ENCODE measurements at regions of chr21 and their contacts with region 1.

Region 1: DNA sequence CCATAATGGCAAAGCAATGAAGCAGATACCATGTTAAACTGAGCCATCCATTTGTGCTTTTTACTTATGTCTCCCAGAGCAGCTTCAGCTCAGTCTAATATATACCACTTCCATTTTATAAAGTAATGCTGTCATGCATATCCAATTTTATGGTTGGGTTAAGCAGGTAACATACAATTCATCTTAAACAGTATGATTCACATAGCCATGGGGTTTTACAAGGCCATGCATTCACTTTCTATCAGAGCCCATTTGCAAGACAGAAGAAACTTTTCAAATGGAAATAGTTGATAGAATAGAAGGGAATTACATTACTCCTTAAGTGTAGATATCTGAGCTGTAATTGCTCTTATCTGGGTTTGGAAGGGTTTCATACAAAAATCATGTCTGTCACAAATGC is 580.5 kb upstream of the CXADR start:
- DNase-seq: no peak
- ATAC-seq: no peak
- H3K4me3 ChIP-seq: no peak overlapping the region
- H3K27ac ChIP-seq: no peak overlapping the region
- H3K4me1 ChIP-seq: no peaks in the 10 kb centered on the region
- H3K27me3 ChIP-seq: no peaks in the 10 kb centered on the region
- CTCF ChIP-seq: no peak

Region 2: DNA sequence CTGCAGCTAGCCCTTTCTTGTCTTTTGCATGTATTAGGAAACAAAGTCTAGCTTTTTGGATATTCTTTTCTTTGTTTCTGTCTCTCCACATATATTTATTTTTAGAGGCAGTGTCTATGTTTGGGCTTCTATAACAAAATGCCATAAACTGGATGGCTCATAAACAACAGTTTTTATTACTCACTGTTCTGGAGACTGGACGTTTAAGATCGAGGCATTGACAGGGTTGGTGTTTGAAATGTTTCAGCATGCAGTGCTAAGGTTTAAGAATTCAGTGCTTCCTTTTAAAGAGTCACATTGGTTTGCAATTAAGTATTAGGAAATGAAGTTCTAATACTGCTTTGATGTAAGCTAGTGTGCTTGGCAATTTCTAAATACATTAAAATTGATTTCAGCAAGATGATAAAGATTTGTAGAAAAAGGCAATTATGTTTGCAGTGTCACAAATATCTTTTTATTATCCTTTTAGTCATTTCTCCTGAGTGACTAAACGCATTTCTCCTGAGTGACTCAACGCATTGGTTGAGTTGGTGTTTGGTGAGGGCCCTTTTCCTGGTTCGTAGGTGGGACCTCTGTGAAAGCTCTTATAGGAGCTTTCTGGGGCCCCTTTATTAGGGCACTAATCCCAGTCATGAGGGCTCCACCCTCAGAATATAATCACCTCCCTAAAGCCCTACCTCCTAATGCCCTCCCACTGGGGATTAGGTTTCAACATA is 885.5 kb before region 1 on chr21:
- intact Hi-C with region 1: loop called in 1 of 2 experiments (anchors 5 kb)
- DNase-seq: no peak
- ATAC-seq: no peak
- H3K4me3 ChIP-seq: no peak overlapping the region
- H3K27ac ChIP-seq: no peak overlapping the region
- H3K4me1 ChIP-seq: no peaks in the 10 kb centered on the region
- H3K27me3 ChIP-seq: no peaks in the 10 kb centered on the region
- CTCF ChIP-seq: no peak

Region 3: DNA sequence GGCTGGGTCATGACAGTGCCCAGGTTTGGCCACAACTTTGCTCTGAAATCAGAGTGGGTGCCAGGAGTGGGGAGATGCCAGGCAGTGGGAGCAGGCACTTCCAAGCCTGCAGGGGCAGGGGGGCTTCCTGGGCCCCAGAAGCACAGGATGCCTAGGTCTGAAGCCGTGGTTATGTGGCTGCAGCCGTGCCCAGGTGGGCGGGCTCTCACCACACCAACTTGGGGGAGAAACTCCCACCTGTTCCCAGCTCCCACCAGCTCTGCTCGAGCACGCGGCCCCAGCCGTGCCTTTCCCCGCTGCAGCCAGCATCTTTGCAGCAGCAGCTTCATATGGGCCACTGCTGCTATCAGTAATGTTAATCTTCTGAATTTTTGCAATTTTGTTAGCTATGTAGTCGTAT is 871.1 kb before region 1 on chr21:
- intact Hi-C with region 1: no loop called
- DNase-seq: no peak
- ATAC-seq: no peak
- H3K4me3 ChIP-seq: no peak overlapping the region
- H3K27ac ChIP-seq: no peak overlapping the region
- H3K4me1 ChIP-seq: no peaks in the 10 kb centered on the region
- H3K27me3 ChIP-seq: no peaks in the 10 kb centered on the region
- CTCF ChIP-seq: no peak

Region 4: GRCh38 chr21:16992448-16992847 is 60.1 kb after region 1 on chr21:
- intact Hi-C with region 1: loop called in 1 of 2 experiments (anchors 10 kb)
- DNase-seq: no peak
- ATAC-seq: no peak
- H3K4me3 ChIP-seq: no peak overlapping the region
- H3K27ac ChIP-seq: no peak overlapping the region
- H3K4me1 ChIP-seq: no peaks in the 10 kb centered on the region
- H3K27me3 ChIP-seq: no peaks in the 10 kb centered on the region
- CTCF ChIP-seq: no peak

Region 5: DNA sequence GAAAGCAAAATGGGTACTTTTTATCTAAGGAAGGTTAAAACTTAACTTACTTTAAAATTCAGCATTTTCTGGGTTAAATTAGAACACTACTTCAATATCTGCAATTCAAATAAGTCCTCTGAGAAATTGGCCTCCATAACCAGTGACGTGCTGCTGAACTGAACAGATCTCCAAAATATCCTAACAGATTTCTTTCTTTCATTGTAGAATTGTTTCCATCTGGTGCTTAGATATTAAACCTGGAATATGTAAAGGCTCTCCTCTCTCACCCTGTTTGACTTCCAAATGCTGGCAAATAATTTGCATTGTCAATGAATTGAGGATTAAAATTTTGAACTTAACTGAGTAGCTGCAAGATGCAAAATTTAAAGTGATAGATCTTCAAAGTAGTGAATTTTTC is 263.7 kb after region 1 on chr21:
- intact Hi-C with region 1: no loop called
- DNase-seq: no peak
- ATAC-seq: no peak
- H3K4me3 ChIP-seq: no peak overlapping the region
- H3K27ac ChIP-seq: no peak overlapping the region
- H3K4me1 ChIP-seq: no peaks in the 10 kb centered on the region
- H3K27me3 ChIP-seq: no peaks in the 10 kb centered on the region
- CTCF ChIP-seq: no peak